ENCODE measurements at regions of chr13 and their contacts with region 1.

Region 1: GRCh38 chr13:24053519-24054251 is 106.8 kb upstream of the SPATA13 start:
- DNase-seq: no peak
- H3K4me3 ChIP-seq: no peak overlapping the region
- H3K27ac ChIP-seq: peak overlapping the region; percentile 43
- H3K27me3 ChIP-seq: no peaks in the 10 kb centered on the region
- CTCF ChIP-seq: peak; percentile 84

Region 2: DNA sequence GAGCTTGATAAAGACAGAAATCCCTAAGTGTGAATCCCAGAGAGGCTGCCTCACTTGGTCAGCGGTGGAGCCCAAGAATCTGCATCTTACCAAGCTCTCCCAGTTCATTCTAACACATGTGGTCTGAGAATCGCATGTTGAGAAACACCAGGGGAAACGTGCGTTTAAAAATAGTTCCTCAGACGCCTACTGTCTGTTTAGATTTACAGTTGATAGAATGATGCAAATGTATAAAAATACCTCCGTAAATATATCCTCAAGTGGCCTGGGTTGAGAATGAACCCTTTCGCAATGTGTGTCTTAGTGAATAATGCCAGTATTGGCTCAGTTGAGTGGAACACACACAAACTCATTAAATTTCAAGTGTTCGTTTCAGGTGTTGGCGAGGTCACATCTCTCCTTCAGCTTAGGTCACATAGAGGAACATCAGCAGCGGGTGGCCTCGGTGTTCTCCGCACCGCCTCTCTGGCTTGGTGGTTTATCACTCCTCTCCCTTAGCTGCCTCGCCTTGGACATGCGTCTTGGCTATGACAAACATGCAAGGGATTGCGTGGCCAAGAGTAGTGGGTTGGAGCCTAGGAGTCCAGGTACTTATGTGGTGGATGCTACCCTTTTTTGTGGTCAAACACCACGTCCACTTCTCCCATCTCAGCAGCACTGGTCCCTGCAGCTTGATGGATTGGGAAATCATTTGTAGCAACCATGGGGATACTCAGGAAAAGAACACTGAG is 10.8 kb before region 1 on chr13:
- CTCF ChIA-PET with region 1: interaction called, 15 read pairs
- POLR2A ChIA-PET with region 1: no interaction called
- DNase-seq: no peak
- H3K4me3 ChIP-seq: no peak overlapping the region
- H3K27ac ChIP-seq: no peak overlapping the region
- H3K27me3 ChIP-seq: no peaks in the 10 kb centered on the region
- CTCF ChIP-seq: no peak

Region 3: DNA sequence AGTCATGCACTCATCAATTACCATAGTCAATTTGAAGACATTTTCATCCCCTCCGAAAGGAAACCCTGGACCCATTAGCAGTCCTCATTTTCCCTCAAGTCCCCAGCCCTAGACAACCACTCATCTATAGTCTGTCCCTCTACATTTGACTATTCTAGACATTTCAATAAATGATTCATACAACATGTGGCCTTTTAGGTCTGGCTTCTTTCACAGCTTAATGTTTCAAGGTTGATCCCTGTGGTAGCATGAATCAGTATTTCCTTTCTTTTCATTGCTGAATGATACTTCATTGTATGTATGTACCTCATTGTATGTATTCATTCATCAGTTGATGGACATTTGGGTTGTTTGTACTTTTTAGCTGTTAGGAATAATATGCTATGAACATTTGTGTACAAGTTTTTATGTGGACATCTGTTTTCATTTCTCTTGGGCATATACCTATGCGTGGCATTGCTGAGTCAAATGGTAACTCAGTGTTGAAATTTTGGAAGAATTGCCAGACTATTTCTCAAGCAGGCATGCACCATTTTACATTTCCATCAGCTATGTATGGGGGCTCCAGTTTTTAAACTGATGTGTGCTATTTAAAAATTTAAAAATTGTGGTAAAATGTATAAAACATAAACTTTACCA is 125.3 kb after region 1 on chr13:
- CTCF ChIA-PET with region 1: interaction called, 10 read pairs
- POLR2A ChIA-PET with region 1: no interaction called
- DNase-seq: no peak
- H3K4me3 ChIP-seq: no peak overlapping the region
- H3K27ac ChIP-seq: no peak overlapping the region
- H3K27me3 ChIP-seq: no peaks in the 10 kb centered on the region
- CTCF ChIP-seq: no peak

Region 4: DNA sequence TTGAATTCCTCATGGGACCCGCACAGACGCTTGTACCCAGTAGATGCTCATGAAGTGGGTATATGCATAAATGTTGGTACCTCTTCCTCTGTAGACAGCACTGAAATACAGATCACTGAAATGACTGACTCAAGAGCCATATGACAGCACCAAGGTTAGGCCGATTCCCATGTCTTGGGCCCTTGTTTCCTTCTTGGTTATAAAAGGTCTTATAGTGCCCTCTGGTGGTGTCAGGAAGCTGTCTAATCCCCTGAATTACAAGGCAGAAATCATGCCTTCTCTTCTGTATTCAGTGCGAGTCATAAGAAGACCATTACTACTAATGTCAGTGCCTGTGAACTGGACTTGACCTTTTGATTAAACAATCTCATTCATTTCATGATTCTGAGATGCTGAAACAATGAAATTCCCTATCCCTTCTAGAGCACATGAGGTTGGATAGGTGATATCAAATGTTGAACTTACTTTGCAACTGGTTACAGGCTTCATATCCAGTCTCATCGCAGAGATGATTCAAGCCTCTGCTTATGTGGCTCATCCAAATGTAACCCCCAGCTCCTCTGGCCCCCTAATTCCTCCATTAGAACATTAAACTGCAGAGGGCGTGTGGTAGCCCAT is 166.5 kb after region 1 on chr13:
- CTCF ChIA-PET with region 1: interaction called, 36 read pairs
- POLR2A ChIA-PET with region 1: no interaction called
- DNase-seq: peak; percentile 61
- H3K4me3 ChIP-seq: no peak overlapping the region
- H3K27ac ChIP-seq: no peak overlapping the region
- H3K27me3 ChIP-seq: no peaks in the 10 kb centered on the region
- CTCF ChIP-seq: peak; percentile 73

Region 5: GRCh38 chr13:24288870-24289269 is 235.2 kb after region 1 on chr13:
- CTCF ChIA-PET with region 1: no interaction called
- POLR2A ChIA-PET with region 1: no interaction called
- DNase-seq: no peak
- H3K4me3 ChIP-seq: no peak overlapping the region
- H3K27ac ChIP-seq: no peak overlapping the region
- H3K27me3 ChIP-seq: no peaks in the 10 kb centered on the region
- CTCF ChIP-seq: no peak

Measured in AG04450 (cell line).